CD8-positive, alpha-beta memory T cell (primary cell): ENCODE measurements at regions of chr3 and their contacts with region 1.

Region 1: GRCh38 chr3:69161587-69162307 is 39.4 kb upstream of the LMOD3 start:
- DNase-seq: peak in 4 of 5 donors; percentile 6 to 56 (median 44)
- H3K4me3 ChIP-seq: no peak overlapping the region
- H3K4me3 Mint-ChIP-seq: no peak overlapping the region
- H3K27ac ChIP-seq: no peak overlapping the region
- H3K27ac Mint-ChIP-seq: peak overlapping the region in 1 of 8 donors; percentile 5
- H3K4me1 ChIP-seq: no peaks in the 10 kb centered on the region
- H3K4me1 Mint-ChIP-seq: peaks cover 3 to 9% (median 4%) of the 10 kb centered on the region in 3 donors
- H3K27me3 ChIP-seq: no peaks in the 10 kb centered on the region
- H3K27me3 Mint-ChIP-seq: peaks cover 8 to 11% of the 10 kb centered on the region in 2 donors

Region 2: DNA sequence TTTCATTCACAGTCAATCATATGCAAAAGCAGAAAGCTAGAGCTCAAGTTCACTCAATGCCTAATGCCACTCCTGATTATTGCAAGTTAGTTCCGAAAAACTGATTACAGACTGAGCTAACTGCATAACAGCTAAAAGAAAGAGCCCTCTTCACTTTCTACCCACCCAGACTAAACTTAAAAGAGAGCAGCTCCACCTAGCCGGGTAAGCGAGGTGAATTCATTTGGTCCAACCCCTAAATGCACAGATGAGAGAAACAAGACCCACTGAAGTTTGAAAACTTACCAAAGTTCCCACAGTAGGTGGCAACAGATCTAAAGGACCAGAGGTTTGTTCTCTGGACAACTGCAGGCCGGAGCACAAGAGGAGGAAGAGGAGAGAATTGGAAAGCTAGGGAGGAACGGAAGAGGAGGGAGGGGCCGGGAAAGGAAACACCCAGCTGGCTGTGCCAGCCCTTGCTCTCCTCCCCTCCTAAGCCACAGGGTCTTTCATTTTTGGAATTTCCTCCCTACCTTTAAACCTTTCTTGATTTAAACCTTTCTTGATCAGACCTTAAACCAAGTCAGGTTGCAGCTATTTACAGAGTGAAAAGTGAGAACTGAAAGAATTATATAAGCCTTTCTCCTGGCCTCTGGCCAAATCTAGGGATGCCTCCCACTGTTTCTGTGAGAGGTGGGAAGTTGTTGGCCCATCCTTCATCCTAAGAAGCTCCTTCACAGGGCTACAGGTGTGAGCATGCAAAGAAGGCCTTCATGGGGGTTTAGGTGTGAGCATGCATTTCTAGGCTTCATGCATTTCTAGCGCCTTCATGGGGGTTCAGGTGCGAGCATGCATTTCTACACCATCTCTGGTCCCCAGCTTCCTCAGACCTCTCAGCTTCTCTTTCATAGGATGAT is 75.3 kb after region 1 on chr3:
- CTCF ChIA-PET with region 1: interaction called, 11 read pairs
- POLR2A ChIA-PET with region 1: no interaction called
- DNase-seq: no peak
- H3K4me3 ChIP-seq: no peak overlapping the region
- H3K4me3 Mint-ChIP-seq: peak overlapping the region in 6 of 7 donors; percentile 6 to 54 (median 26)
- H3K27ac ChIP-seq: no peak overlapping the region
- H3K27ac Mint-ChIP-seq: peak overlapping the region in 6 of 8 donors; percentile 9 to 93 (median 58)
- H3K4me1 ChIP-seq: peaks cover 22% of the 10 kb centered on the region
- H3K4me1 Mint-ChIP-seq: peaks cover 14 to 25% (median 25%) of the 10 kb centered on the region in 3 donors
- H3K27me3 ChIP-seq: no peaks in the 10 kb centered on the region
- H3K27me3 Mint-ChIP-seq: no peaks in the 10 kb centered on the region

Region 3: GRCh38 chr3:69320871-69321271 is 159.1 kb after region 1 on chr3:
- CTCF ChIA-PET with region 1: interaction called, 15 read pairs
- POLR2A ChIA-PET with region 1: no interaction called
- DNase-seq: no peak
- H3K4me3 ChIP-seq: no peak overlapping the region
- H3K4me3 Mint-ChIP-seq: no peak overlapping the region
- H3K27ac ChIP-seq: no peak overlapping the region
- H3K27ac Mint-ChIP-seq: peak overlapping the region in 1 of 8 donors; percentile 74
- H3K4me1 ChIP-seq: no peaks in the 10 kb centered on the region
- H3K4me1 Mint-ChIP-seq: no peaks in the 10 kb centered on the region
- H3K27me3 ChIP-seq: no peaks in the 10 kb centered on the region
- H3K27me3 Mint-ChIP-seq: no peaks in the 10 kb centered on the region

Region 4: DNA sequence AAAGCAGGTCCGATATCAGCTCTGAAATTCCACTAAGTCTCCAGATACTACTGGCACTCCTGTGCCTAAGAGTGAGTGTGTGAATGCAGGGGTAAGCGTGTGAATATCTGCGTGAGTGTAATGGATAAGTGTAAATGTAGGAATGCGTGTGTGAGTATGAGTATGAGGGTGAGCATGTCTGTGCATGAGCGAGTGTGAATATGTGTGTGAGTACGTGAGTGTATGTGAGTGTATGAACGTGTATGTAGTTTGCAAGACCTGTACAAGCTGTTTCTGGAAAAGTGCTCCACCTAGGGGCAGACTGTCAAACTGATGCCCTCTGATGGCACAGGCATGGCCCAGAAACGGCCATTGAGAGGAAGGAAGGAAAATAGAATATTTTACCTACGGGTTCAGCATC is 248.5 kb after region 1 on chr3:
- CTCF ChIA-PET with region 1: interaction called, 14 read pairs
- POLR2A ChIA-PET with region 1: interaction called, 3 read pairs
- DNase-seq: peak; percentile 18 to 69 (median 32)
- H3K4me3 ChIP-seq: no peak overlapping the region
- H3K4me3 Mint-ChIP-seq: no peak overlapping the region
- H3K27ac ChIP-seq: no peak overlapping the region
- H3K27ac Mint-ChIP-seq: no peak overlapping the region
- H3K4me1 ChIP-seq: no peaks in the 10 kb centered on the region
- H3K4me1 Mint-ChIP-seq: peaks cover 3 to 5% (median 4%) of the 10 kb centered on the region in 3 donors
- H3K27me3 ChIP-seq: peaks cover 4% of the 10 kb centered on the region
- H3K27me3 Mint-ChIP-seq: peaks cover 0 to 6% of the 10 kb centered on the region in 2 donors

Region 5: DNA sequence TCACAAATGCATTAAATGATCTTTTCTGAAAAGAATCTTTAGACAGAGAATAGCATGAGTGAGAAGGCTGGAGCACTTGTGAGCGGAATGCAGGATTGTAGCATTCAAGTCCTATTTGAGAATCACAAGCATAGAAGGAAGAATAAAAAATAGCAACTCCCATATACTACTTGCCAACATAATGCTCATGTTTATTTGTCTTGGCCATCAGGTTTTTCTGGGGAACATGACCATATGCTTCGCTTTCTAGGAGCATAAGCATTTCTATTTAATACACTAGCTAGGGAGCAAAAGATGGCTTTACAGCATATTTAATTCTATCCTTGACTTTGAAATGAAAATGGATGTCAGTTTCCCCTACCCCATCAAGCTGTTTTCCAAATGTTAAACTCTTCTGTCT is 407.2 kb after region 1 on chr3:
- CTCF ChIA-PET with region 1: no interaction called
- POLR2A ChIA-PET with region 1: no interaction called
- DNase-seq: no peak
- H3K4me3 ChIP-seq: no peak overlapping the region
- H3K4me3 Mint-ChIP-seq: no peak overlapping the region
- H3K27ac ChIP-seq: no peak overlapping the region
- H3K27ac Mint-ChIP-seq: no peak overlapping the region
- H3K4me1 ChIP-seq: no peaks in the 10 kb centered on the region
- H3K4me1 Mint-ChIP-seq: no peaks in the 10 kb centered on the region
- H3K27me3 ChIP-seq: no peaks in the 10 kb centered on the region
- H3K27me3 Mint-ChIP-seq: no peaks in the 10 kb centered on the region